Activated CD4-positive, alpha-beta T cell treated with anti-CD3 and anti-CD28 coated beads for 36 hours (primary cell): ENCODE measurements at regions of chr4 and their contacts with region 1.

Region 1: DNA sequence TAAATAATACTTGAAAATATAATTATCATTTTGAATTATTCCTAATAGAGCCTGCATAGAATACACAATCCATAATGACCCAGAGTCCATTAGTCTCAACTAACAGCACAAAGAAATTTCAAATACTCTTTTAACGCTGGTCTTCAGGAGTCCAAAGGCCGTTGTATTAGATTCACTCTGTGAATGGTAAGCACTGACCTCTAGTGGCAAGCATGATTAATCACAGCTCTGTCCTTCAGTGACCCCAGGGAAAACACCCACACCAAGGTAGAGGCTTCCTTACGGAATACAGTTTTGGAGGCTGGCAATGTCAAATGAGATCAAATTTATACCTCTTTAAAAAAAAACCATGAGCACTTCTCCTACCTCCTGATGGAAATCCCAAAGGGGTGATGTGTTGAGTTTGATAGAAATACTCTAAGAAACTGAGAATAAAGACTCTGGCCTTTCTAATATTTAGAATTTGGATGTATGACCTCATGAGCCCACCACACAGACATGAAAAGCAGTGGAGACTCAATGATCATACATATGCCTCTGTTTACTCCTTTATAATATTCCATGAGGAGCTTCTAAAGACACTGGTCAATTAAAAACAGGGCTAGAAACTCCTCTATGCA is 147.2 kb upstream of the DKK2 start:
- DNase-seq: peak; percentile 4
- ATAC-seq: peak; percentile 76
- H3K4me3 Mint-ChIP-seq: no peak overlapping the region
- H3K27ac Mint-ChIP-seq: no peak overlapping the region
- H3K4me1 Mint-ChIP-seq: no peaks in the 10 kb centered on the region
- H3K27me3 Mint-ChIP-seq: peaks cover 5% of the 10 kb centered on the region

Region 2: DNA sequence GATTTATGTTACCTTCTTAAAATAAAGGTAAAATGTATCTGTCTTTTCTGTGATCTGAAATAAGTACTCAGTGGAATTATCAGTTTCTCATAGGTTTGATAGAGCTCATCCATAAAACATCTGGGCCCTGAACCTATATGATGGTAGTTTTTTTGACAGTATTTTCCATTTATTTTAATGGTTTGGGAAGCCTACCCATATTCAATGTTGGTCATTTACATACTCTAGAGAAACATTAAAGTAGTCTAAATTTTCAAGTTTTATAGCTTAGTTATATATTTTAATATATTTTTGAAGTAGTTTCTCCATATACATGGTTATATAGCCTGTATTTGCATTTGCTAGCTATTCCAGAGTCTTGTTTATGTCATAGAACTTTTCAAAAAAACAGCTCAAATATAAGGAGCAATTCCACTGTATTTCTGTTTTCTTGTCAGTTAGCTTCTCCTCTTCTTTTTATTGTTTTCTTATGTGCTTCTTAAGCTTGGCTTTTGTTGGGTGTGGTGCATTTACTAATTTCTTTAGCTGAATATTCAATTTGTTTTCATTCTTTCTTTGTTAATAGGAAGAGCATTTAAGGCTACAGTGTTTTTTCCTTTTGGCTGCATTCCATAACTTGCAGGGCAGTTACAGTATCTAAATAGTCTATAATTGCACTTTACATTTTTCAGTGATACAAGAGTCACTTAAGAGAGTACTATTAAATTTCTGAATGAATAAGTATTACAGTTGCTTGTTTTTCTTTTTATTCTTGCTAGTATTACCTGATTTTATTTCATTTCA is 328.5 kb before region 1 on chr4:
- CTCF ChIA-PET with region 1: no interaction called
- POLR2A ChIA-PET with region 1: no interaction called
- intact Hi-C with region 1: no loop called
- DNase-seq: no peak
- ATAC-seq: no peak
- H3K4me3 Mint-ChIP-seq: no peak overlapping the region
- H3K27ac Mint-ChIP-seq: no peak overlapping the region
- H3K4me1 Mint-ChIP-seq: no peaks in the 10 kb centered on the region
- H3K27me3 Mint-ChIP-seq: no peaks in the 10 kb centered on the region

Region 3: GRCh38 chr4:107037199-107037584 is 146.1 kb before region 1 on chr4:
- CTCF ChIA-PET with region 1: interaction called, 3 read pairs
- POLR2A ChIA-PET with region 1: no interaction called
- intact Hi-C with region 1: loop called in 1 of 2 experiments (anchors 5 kb)
- DNase-seq: peak; percentile 40
- ATAC-seq: peak; percentile 38
- H3K4me3 Mint-ChIP-seq: no peak overlapping the region
- H3K27ac Mint-ChIP-seq: no peak overlapping the region
- H3K4me1 Mint-ChIP-seq: peaks cover 24% of the 10 kb centered on the region
- H3K27me3 Mint-ChIP-seq: peaks cover 54% of the 10 kb centered on the region

Region 4: DNA sequence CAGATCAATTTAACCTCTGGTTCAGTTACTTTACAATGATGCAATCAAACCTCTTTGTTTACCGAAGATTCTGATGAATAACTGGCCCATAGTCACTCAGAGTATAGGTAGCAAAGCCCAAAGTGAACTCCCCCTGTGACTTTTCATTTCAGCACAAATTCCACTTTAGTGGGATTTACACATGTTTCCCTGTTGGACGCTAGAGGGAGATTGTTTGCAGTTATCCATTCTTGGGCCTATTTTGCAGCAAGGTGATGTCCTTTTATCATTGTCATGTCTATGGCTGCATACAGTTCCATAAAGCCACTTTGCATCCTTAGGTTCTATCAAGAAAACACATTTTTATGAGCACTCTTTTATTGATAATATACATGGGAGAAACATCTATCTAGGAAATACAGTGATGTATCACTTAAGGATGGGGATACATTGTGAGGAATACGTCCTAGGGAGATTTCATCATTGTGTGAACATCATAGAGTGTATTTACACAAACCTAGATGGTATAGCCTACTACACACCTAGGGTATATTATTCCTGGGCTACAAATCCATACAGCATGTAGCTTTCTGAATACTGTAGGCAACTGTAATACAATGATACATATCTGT is 132.6 kb before region 1 on chr4:
- CTCF ChIA-PET with region 1: interaction called, 3 read pairs
- POLR2A ChIA-PET with region 1: no interaction called
- intact Hi-C with region 1: loop called in 1 of 2 experiments (anchors 5 kb)
- DNase-seq: no peak
- ATAC-seq: no peak
- H3K4me3 Mint-ChIP-seq: no peak overlapping the region
- H3K27ac Mint-ChIP-seq: no peak overlapping the region
- H3K4me1 Mint-ChIP-seq: no peaks in the 10 kb centered on the region
- H3K27me3 Mint-ChIP-seq: no peaks in the 10 kb centered on the region

Region 5: DNA sequence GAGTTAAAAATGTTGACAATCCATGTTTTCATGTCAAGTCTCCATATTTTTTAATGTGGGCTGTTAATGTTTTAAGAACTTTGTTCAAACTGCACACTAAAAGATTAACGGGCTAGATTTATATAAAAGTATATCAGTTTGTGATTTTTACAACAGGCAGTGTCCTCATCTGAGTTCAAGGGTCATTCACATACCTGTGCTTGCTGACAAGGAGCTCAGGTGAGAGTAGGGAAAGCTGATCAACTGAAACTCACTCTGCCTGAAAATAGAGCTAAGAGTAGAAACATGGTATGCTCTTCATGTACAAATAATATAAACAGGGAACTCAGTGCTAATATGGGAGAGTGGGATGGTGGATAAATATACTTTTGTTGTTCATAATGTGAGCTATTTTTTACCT is 44.8 kb before region 1 on chr4:
- CTCF ChIA-PET with region 1: no interaction called
- POLR2A ChIA-PET with region 1: no interaction called
- intact Hi-C with region 1: no loop called
- DNase-seq: no peak
- ATAC-seq: no peak
- H3K4me3 Mint-ChIP-seq: no peak overlapping the region
- H3K27ac Mint-ChIP-seq: no peak overlapping the region
- H3K4me1 Mint-ChIP-seq: no peaks in the 10 kb centered on the region
- H3K27me3 Mint-ChIP-seq: no peaks in the 10 kb centered on the region

Region 6: DNA sequence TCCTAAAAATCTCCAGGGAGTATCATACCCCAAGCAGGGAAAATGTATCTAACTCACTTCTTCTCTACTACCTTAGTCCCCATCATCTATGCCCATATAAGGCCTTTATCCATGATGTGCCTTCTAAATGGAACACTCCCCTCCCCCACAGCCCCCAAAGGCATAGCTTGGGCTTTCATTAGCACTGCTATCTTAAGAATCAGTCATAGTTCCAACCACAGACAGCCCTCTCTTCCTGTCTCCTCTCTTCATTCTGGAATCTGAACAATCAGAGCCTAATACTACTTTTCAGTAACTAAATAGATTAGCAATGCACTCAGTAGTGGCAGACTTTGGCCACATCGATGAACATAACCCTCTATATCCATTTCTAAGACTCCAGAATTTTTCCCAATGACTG is 166.0 kb after region 1 on chr4:
- CTCF ChIA-PET with region 1: no interaction called
- POLR2A ChIA-PET with region 1: no interaction called
- intact Hi-C with region 1: no loop called
- DNase-seq: no peak
- ATAC-seq: no peak
- H3K4me3 Mint-ChIP-seq: no peak overlapping the region
- H3K27ac Mint-ChIP-seq: no peak overlapping the region
- H3K4me1 Mint-ChIP-seq: no peaks in the 10 kb centered on the region
- H3K27me3 Mint-ChIP-seq: peaks cover 7% of the 10 kb centered on the region

Region 7: GRCh38 chr4:107951551-107951950 is 768.3 kb after region 1 on chr4:
- CTCF ChIA-PET with region 1: no interaction called
- POLR2A ChIA-PET with region 1: no interaction called
- intact Hi-C with region 1: no loop called
- DNase-seq: no peak
- ATAC-seq: no peak
- H3K4me3 Mint-ChIP-seq: no peak overlapping the region
- H3K27ac Mint-ChIP-seq: no peak overlapping the region
- H3K4me1 Mint-ChIP-seq: no peaks in the 10 kb centered on the region
- H3K27me3 Mint-ChIP-seq: no peaks in the 10 kb centered on the region